ENCODE measurements at regions of chr12 and their contacts with region 1.

Region 1: GRCh38 chr12:111841750-111842555 is at the start of gene MAPKAPK5:
- DNase-seq: peak; percentile 92
- H3K4me3 Mint-ChIP-seq: peak within 1 kb of the TSS; percentile 93
- H3K27ac Mint-ChIP-seq: peak within 1 kb of the TSS; percentile 99
- H3K4me1 Mint-ChIP-seq: peaks cover 26% of the 10 kb centered on the region
- H3K27me3 Mint-ChIP-seq: no peaks in the 10 kb centered on the region
- CTCF ChIP-seq: no peak
- total RNA-seq, gene MAPKAPK5: 46.3 and 51.3 TPM in 2 replicates

Region 2: GRCh38 chr12:111685744-111686517 is 156.0 kb before region 1 on chr12 and contains the starts of genes ACAD10 and BRAP:
- CTCF ChIA-PET with region 1: no interaction called
- POLR2A ChIA-PET with region 1: interaction called, 26 read pairs
- intact Hi-C with region 1: no loop called
- DNase-seq: peak; percentile 93
- H3K4me3 Mint-ChIP-seq: peak within 1 kb of the TSS; percentile 93
- H3K27ac Mint-ChIP-seq: peak within 1 kb of the TSS; percentile 93
- H3K4me1 Mint-ChIP-seq: peaks cover 17% of the 10 kb centered on the region
- H3K27me3 Mint-ChIP-seq: no peaks in the 10 kb centered on the region
- CTCF ChIP-seq: no peak
- total RNA-seq, gene ACAD10: 25.4 and 31.0 TPM in 2 replicates
- total RNA-seq, gene BRAP: 22.1 and 24.4 TPM in 2 replicates

Region 3: GRCh38 chr12:111775205-111776193 is 66.5 kb before region 1 on chr12:
- CTCF ChIA-PET with region 1: interaction called, 3 read pairs
- POLR2A ChIA-PET with region 1: interaction called, 17 read pairs
- intact Hi-C with region 1: no loop called
- DNase-seq: peak; percentile 89
- H3K4me3 Mint-ChIP-seq: peak overlapping the region; percentile 63
- H3K27ac Mint-ChIP-seq: peak overlapping the region; percentile 93
- H3K4me1 Mint-ChIP-seq: peaks cover 24% of the 10 kb centered on the region
- H3K27me3 Mint-ChIP-seq: no peaks in the 10 kb centered on the region
- CTCF ChIP-seq: no peak

Region 4: GRCh38 chr12:111826316-111826715 is 15.6 kb before region 1 on chr12:
- CTCF ChIA-PET with region 1: interaction called, 3 read pairs
- POLR2A ChIA-PET with region 1: interaction called, 18 read pairs
- intact Hi-C with region 1: no loop called
- DNase-seq: no peak
- H3K4me3 Mint-ChIP-seq: no peak overlapping the region
- H3K27ac Mint-ChIP-seq: no peak overlapping the region
- H3K4me1 Mint-ChIP-seq: no peaks in the 10 kb centered on the region
- H3K27me3 Mint-ChIP-seq: peaks cover 23% of the 10 kb centered on the region
- CTCF ChIP-seq: no peak

Region 5: DNA sequence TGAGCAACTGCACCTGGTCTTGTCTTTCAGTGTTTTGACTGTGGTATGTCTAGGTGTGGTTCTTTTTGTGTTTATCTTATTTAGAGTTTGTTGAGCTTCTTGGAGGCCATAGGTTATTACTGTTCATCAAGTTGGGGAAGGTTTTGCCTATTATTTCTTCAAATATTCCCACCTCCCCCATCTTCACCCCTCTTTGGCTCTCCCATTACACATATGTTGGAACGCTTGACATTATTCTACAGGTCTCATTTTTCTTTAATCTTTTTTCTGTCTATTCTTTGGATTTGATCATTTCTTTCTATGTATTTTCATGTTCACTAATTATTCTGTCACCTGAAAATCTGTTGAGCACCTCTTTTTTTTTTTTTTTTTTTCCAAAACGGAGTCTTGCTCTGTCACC is 16.2 kb after region 1 on chr12:
- CTCF ChIA-PET with region 1: no interaction called
- POLR2A ChIA-PET with region 1: interaction called, 10 read pairs
- intact Hi-C with region 1: no loop called
- DNase-seq: no peak
- H3K4me3 Mint-ChIP-seq: no peak overlapping the region
- H3K27ac Mint-ChIP-seq: no peak overlapping the region
- H3K4me1 Mint-ChIP-seq: no peaks in the 10 kb centered on the region
- H3K27me3 Mint-ChIP-seq: no peaks in the 10 kb centered on the region
- CTCF ChIP-seq: no peak